Naive thymus-derived CD8-positive, alpha-beta T cell (primary cell): ENCODE measurements at regions of chr5 and their contacts with region 1.

Region 1: GRCh38 chr5:126422989-126423788 is at the start of gene GRAMD2B:
- DNase-seq: peak; percentile 44 to 84 (median 70)
- ATAC-seq: peak; percentile 90 to 96
- H3K4me3 Mint-ChIP-seq: peak within 1 kb of the TSS; percentile 87 to 95 (median 90)
- H3K27ac Mint-ChIP-seq: peak within 1 kb of the TSS; percentile 88 to 98 (median 96)
- H3K4me1 Mint-ChIP-seq: peaks cover 15 to 37% (median 34%) of the 10 kb centered on the region in 4 donors
- H3K27me3 Mint-ChIP-seq: peaks cover 0 to 1% (median 0%) of the 10 kb centered on the region in 5 donors
- polyA plus RNA-seq, gene GRAMD2B: 5.3 to 7.1 (median 6.0) TPM

Region 2: GRCh38 chr5:126354012-126354857 is 69.0 kb before region 1 on chr5:
- POLR2A ChIA-PET with region 1: no interaction called
- DNase-seq: peak in 4 of 10 donors; percentile 10 to 63 (median 57)
- ATAC-seq: peak; percentile 56 to 79
- H3K4me3 Mint-ChIP-seq: peak overlapping the region; percentile 50 to 78 (median 72)
- H3K27ac Mint-ChIP-seq: peak overlapping the region in 7 of 10 donors; percentile 3 to 80 (median 52)
- H3K4me1 Mint-ChIP-seq: peaks cover 8 to 20% (median 15%) of the 10 kb centered on the region in 4 donors
- H3K27me3 Mint-ChIP-seq: peaks cover 0 to 7% (median 0%) of the 10 kb centered on the region in 5 donors

Region 3: GRCh38 chr5:126449751-126450271 is 26.6 kb after region 1 on chr5:
- POLR2A ChIA-PET with region 1: interaction called, 33 read pairs
- DNase-seq: peak in 9 of 10 donors; percentile 32 to 79 (median 53)
- ATAC-seq: peak; percentile 88 to 92
- H3K4me3 Mint-ChIP-seq: peak overlapping the region; percentile 81 to 90 (median 88)
- H3K27ac Mint-ChIP-seq: peak overlapping the region; percentile 95 to 99 (median 98)
- H3K4me1 Mint-ChIP-seq: peaks cover 31 to 65% (median 60%) of the 10 kb centered on the region in 4 donors
- H3K27me3 Mint-ChIP-seq: no peaks in the 10 kb centered on the region